Endothelial cell of umbilical vein (primary cell): ENCODE measurements at regions of chr1 and their contacts with region 1.

Region 1: DNA sequence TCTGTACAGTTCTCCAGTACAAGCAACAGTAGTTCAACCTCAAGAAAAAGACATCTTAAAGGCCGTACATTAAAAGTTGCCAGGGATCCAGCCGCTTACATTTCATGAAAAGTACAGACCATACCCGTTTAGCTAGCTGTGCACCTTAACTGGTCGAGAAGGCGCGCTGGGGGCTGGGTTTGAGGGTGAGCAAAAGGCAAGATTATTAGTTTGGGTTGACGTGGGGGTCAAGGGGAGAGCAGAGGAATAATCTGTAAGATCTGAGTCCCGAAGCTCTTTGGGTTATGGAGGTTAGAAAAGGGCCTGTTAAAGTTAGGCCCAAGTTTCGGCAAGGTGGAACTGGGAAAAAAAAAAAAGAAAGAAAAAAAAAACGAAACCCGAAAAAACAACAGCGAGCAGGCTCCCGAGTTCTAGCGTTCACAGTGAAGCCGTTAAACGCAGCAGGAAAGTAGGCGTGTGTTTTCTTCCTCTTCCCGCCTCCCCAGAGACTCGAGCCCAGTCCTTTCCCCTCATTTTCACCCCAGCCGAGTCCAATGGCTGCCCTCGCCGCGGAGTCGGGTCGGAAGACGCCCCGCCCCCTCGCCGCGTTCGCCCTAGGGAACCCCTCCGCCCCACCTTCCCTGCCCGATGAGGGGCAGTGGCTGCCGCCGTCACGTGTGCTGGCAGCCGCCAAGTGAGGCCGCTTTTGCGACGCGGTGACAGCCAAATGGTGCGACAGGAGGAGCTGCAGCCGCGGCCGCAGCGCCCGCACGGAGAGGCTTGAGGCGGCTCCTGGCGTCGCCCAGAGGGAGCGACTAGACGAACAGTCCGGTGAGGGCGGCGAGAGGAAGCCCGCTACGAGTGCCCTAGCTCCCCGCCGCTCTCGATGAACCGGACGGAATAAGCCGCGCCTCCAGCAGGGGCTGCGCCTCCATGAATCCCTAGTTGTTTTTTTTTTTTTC is at the start of gene PKN2:
- DNase-seq: peak; percentile 100
- H3K4me3 ChIP-seq: peak within 1 kb of the TSS; percentile 91 to 100 (median 98)
- H3K27ac ChIP-seq: peak within 1 kb of the TSS; percentile 64
- H3K4me1 ChIP-seq: peaks cover 32% of the 10 kb centered on the region
- H3K27me3 ChIP-seq: no peaks in the 10 kb centered on the region
- CTCF ChIP-seq: peak in 1 of 2 donors; percentile 14
- POLR2A ChIP-seq: peak; percentile 94
- total RNA-seq, gene PKN2: 47.3 and 49.1 TPM in 2 replicates

Region 2: GRCh38 chr1:88327391-88328267 is 356.2 kb before region 1 on chr1:
- CTCF ChIA-PET with region 1: no interaction called
- POLR2A ChIA-PET with region 1: no interaction called
- dilution Hi-C with region 1: no loop called
- intact Hi-C with region 1: loop called (anchors 2 kb)
- DNase-seq: peak; percentile 98
- H3K4me3 ChIP-seq: peak overlapping the region in 1 of 3 experiments; percentile 18
- H3K27ac ChIP-seq: peak overlapping the region; percentile 91
- H3K4me1 ChIP-seq: peaks cover 24% of the 10 kb centered on the region
- H3K27me3 ChIP-seq: no peaks in the 10 kb centered on the region
- CTCF ChIP-seq: no peak
- POLR2A ChIP-seq: no peak

Region 3: DNA sequence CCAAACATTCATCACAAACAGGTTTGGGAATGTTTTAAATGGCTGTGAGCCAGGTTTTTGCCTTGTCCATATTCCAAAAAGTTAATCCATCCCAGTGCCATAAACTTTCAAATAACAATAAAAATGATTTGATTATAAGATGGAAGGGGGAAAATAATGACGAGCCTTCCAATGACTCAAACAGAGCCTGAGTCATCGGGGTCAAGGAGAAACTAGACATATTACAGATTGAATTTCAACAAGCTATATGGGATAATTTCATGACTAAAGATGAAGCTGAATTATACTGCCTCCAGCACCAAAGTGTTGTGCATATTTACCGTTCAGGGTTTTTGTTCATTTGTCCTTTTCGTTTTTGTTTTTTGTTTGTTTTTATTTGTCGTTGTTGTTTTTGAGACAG is 195.5 kb before region 1 on chr1:
- CTCF ChIA-PET with region 1: no interaction called
- POLR2A ChIA-PET with region 1: no interaction called
- dilution Hi-C with region 1: no loop called
- intact Hi-C with region 1: no loop called
- DNase-seq: no peak
- H3K4me3 ChIP-seq: no peak overlapping the region
- H3K27ac ChIP-seq: no peak overlapping the region
- H3K4me1 ChIP-seq: no peaks in the 10 kb centered on the region
- H3K27me3 ChIP-seq: no peaks in the 10 kb centered on the region
- CTCF ChIP-seq: no peak
- POLR2A ChIP-seq: no peak

Region 4: DNA sequence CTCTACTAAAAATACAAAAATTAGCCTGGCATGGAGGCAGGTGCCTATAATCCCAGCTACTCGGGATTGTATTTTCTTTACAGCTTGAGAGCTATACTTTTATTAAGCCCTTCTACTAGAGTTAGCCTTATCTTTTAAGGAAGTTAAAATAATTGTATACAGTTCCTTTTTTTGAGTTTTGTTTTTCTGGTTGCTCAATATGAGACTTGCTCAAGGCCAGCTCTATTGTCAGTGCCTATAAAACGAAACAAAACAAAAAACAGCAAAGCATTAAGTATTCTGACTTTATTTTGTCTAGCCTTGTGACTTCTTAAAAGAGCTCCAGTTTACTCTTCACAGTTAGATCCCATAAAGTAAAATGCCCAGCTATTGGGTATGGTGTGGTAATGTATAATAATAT is 17.5 kb after region 1 on chr1:
- CTCF ChIA-PET with region 1: interaction called, 21 read pairs
- POLR2A ChIA-PET with region 1: interaction called, 5 read pairs
- dilution Hi-C with region 1: no loop called
- intact Hi-C with region 1: loop called (anchors 1 kb)
- DNase-seq: peak; percentile 22
- H3K4me3 ChIP-seq: no peak overlapping the region
- H3K27ac ChIP-seq: no peak overlapping the region
- H3K4me1 ChIP-seq: peaks cover 32% of the 10 kb centered on the region
- H3K27me3 ChIP-seq: no peaks in the 10 kb centered on the region
- CTCF ChIP-seq: no peak
- POLR2A ChIP-seq: no peak

Region 5: GRCh38 chr1:88877382-88877825 is 193.6 kb after region 1 on chr1:
- CTCF ChIA-PET with region 1: interaction called, 16 read pairs
- POLR2A ChIA-PET with region 1: no interaction called
- dilution Hi-C with region 1: no loop called
- intact Hi-C with region 1: no loop called
- DNase-seq: peak; percentile 46
- H3K4me3 ChIP-seq: no peak overlapping the region
- H3K27ac ChIP-seq: no peak overlapping the region
- H3K4me1 ChIP-seq: no peaks in the 10 kb centered on the region
- H3K27me3 ChIP-seq: no peaks in the 10 kb centered on the region
- CTCF ChIP-seq: peak; percentile 14 to 25
- POLR2A ChIP-seq: no peak

Region 6: DNA sequence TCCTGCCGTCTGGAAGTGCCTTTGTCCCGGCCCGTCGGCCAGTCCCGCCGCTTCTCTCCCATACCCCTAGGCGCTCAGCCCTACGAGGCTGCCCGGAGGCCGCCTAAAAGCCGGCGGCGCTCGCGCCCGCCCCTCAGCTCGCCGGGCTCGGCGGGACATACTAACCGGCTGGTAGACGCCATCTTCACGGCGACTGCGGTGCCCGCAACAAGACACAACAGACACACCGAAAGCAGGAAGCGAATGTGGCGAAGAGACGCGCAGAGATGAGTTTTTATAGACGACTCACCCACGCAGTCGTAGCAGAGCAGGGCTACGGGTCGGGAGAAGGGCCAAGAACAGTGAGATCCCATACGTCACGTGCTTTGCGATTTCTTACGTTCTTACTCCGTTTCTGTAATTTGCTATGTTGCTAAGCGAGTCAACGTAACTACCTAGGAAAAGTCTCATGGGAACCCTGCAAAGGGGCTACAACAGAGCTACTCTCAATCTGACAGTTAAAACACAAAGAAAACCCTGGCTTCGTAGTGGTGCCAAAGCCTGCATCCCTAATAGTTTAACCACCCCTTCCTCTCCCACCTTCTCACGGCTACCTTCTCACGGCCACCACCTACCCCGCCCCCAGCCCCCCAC is 207.6 kb after region 1 on chr1 and contains the start of gene GTF2B:
- CTCF ChIA-PET with region 1: no interaction called
- POLR2A ChIA-PET with region 1: interaction called, 3 read pairs
- dilution Hi-C with region 1: no loop called
- intact Hi-C with region 1: loop called (anchors 1 kb)
- DNase-seq: peak; percentile 96
- H3K4me3 ChIP-seq: peak within 1 kb of the TSS; percentile 68 to 91 (median 81)
- H3K27ac ChIP-seq: peak within 1 kb of the TSS; percentile 27
- H3K4me1 ChIP-seq: peaks cover 7% of the 10 kb centered on the region
- H3K27me3 ChIP-seq: peaks cover 1 to 2% of the 10 kb centered on the region in 2 experiments
- CTCF ChIP-seq: no peak
- POLR2A ChIP-seq: peak; percentile 98
- total RNA-seq, gene GTF2B: 18.0 and 19.8 TPM in 2 replicates

Region 7: GRCh38 chr1:88990426-88990825 is 306.6 kb after region 1 on chr1:
- CTCF ChIA-PET with region 1: no interaction called
- POLR2A ChIA-PET with region 1: no interaction called
- dilution Hi-C with region 1: no loop called
- intact Hi-C with region 1: loop called (anchors 1 kb)
- DNase-seq: no peak
- H3K4me3 ChIP-seq: no peak overlapping the region
- H3K27ac ChIP-seq: no peak overlapping the region
- H3K4me1 ChIP-seq: peaks cover 15% of the 10 kb centered on the region
- H3K27me3 ChIP-seq: no peaks in the 10 kb centered on the region
- CTCF ChIP-seq: no peak
- POLR2A ChIP-seq: no peak